ENCODE measurements at regions of chr18 and their contacts with region 1.

Region 1: GRCh38 chr18:13216092-13216582 is 2.4 kb upstream of the LDLRAD4 start:
- DNase-seq: peak; percentile 73
- ATAC-seq: peak; percentile 43
- H3K4me3 Mint-ChIP-seq: peak overlapping the region; percentile 71
- H3K27ac Mint-ChIP-seq: no peak overlapping the region
- H3K4me1 Mint-ChIP-seq: peaks cover 36% of the 10 kb centered on the region
- H3K27me3 Mint-ChIP-seq: peaks cover 30% of the 10 kb centered on the region

Region 2: DNA sequence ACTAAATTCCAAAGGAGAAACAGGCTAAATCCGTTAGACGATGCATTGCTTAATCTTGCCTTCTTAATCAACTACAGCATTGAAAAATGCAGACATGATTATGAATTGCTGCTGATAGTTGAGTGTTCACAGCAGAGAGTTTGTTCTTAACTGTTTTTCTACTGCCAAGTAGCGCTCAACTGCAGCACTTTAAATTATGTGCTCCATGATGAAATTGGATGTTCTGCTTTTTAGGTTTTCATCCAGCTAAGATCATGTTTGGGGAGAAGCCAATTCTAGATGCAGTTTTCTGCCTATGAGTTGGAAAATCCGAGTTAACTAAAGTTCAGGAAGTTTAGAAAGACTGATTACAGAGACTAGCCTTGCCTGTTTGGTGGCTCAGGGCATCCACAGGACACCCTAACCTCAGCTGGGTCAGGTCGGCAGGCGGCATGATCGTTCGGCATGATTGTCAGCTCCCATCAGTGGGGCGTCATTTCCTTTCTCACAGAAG is 1947.3 kb before region 1 on chr18:
- CTCF ChIA-PET with region 1: no interaction called
- POLR2A ChIA-PET with region 1: no interaction called
- DNase-seq: no peak
- ATAC-seq: no peak
- H3K4me3 Mint-ChIP-seq: no peak overlapping the region
- H3K27ac Mint-ChIP-seq: no peak overlapping the region
- H3K4me1 Mint-ChIP-seq: no peaks in the 10 kb centered on the region
- H3K27me3 Mint-ChIP-seq: no peaks in the 10 kb centered on the region

Region 3: GRCh38 chr18:13253762-13254688 is 37.9 kb after region 1 on chr18:
- CTCF ChIA-PET with region 1: no interaction called
- POLR2A ChIA-PET with region 1: no interaction called
- DNase-seq: no peak
- ATAC-seq: no peak
- H3K4me3 Mint-ChIP-seq: no peak overlapping the region
- H3K27ac Mint-ChIP-seq: no peak overlapping the region
- H3K4me1 Mint-ChIP-seq: no peaks in the 10 kb centered on the region
- H3K27me3 Mint-ChIP-seq: no peaks in the 10 kb centered on the region

Region 4: GRCh38 chr18:13268158-13269012 is 52.2 kb after region 1 on chr18:
- CTCF ChIA-PET with region 1: interaction called, 31 read pairs
- POLR2A ChIA-PET with region 1: interaction called, 3 read pairs
- DNase-seq: no peak
- ATAC-seq: no peak
- H3K4me3 Mint-ChIP-seq: no peak overlapping the region
- H3K27ac Mint-ChIP-seq: peak overlapping the region; percentile 6
- H3K4me1 Mint-ChIP-seq: peaks cover 64% of the 10 kb centered on the region
- H3K27me3 Mint-ChIP-seq: no peaks in the 10 kb centered on the region

Region 5: DNA sequence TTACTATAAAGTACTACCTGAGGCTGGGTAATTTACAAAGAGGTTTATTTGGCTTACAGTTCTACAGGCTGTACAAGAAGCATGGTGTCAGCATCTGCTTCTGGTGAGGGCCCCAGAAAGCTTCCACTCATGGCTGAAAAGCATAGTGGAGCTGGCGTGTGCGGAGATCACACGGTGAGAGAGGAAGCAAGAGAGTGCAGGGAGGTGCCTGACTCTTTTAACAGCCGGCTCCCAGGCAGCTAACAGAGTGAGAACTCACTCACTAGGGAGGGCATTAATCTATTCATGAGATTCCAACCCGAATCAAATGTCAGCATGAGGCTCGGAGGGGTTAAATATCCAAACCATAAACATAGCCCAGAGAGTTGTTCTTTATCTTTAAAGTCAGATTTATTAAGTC is 119.8 kb after region 1 on chr18:
- CTCF ChIA-PET with region 1: no interaction called
- POLR2A ChIA-PET with region 1: no interaction called
- DNase-seq: no peak
- ATAC-seq: no peak
- H3K4me3 Mint-ChIP-seq: no peak overlapping the region
- H3K27ac Mint-ChIP-seq: no peak overlapping the region
- H3K4me1 Mint-ChIP-seq: peaks cover 7% of the 10 kb centered on the region
- H3K27me3 Mint-ChIP-seq: peaks cover 2% of the 10 kb centered on the region

Region 6: DNA sequence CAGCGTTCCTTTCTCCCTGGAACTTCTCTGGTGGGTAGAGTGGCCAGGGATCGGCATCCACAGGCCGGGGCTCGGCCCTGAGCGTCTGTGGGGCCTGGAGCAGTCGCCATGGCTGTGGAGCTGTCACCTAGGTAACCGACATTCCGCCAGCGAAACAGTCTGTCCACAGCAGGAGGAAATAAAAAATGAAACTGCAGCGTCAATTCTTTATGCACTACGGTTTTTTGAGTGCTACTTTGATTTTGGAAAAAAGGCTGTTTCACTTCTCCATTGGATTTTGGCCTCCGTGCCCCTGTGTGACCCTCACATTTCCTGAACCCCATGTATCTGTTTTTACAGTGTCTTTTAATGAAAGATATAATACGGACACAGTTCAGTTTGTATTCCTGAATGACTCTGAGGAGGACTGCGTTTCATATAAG is 165.8 kb after region 1 on chr18:
- CTCF ChIA-PET with region 1: interaction called, 33 read pairs
- POLR2A ChIA-PET with region 1: interaction called, 6 read pairs
- DNase-seq: peak; percentile 61
- ATAC-seq: peak; percentile 70
- H3K4me3 Mint-ChIP-seq: peak overlapping the region; percentile 73
- H3K27ac Mint-ChIP-seq: peak overlapping the region; percentile 92
- H3K4me1 Mint-ChIP-seq: peaks cover 56% of the 10 kb centered on the region
- H3K27me3 Mint-ChIP-seq: no peaks in the 10 kb centered on the region

Region 7: GRCh38 chr18:13530033-13530878 is 314.1 kb after region 1 on chr18:
- CTCF ChIA-PET with region 1: interaction called, 11 read pairs
- POLR2A ChIA-PET with region 1: no interaction called
- DNase-seq: no peak
- ATAC-seq: no peak
- H3K4me3 Mint-ChIP-seq: no peak overlapping the region
- H3K27ac Mint-ChIP-seq: peak overlapping the region; percentile 9
- H3K4me1 Mint-ChIP-seq: peaks cover 14% of the 10 kb centered on the region
- H3K27me3 Mint-ChIP-seq: no peaks in the 10 kb centered on the region

Region 8: GRCh38 chr18:13611601-13612195 is 395.6 kb after region 1 on chr18:
- CTCF ChIA-PET with region 1: interaction called, 19 read pairs
- POLR2A ChIA-PET with region 1: interaction called, 3 read pairs
- DNase-seq: peak; percentile 44
- ATAC-seq: peak; percentile 22
- H3K4me3 Mint-ChIP-seq: peak overlapping the region; percentile 84
- H3K27ac Mint-ChIP-seq: peak overlapping the region; percentile 99
- H3K4me1 Mint-ChIP-seq: peaks cover 92% of the 10 kb centered on the region
- H3K27me3 Mint-ChIP-seq: no peaks in the 10 kb centered on the region

Measured in activated CD8-positive, alpha-beta T cell treated with anti-CD3 and anti-CD28 coated beads, Interleukin-2, amount 10 ng/mL, durations not matched to agents 7 days and 5 days (primary cell).